ENCODE measurements at regions of chr3 and their contacts with region 1.

Region 1: DNA sequence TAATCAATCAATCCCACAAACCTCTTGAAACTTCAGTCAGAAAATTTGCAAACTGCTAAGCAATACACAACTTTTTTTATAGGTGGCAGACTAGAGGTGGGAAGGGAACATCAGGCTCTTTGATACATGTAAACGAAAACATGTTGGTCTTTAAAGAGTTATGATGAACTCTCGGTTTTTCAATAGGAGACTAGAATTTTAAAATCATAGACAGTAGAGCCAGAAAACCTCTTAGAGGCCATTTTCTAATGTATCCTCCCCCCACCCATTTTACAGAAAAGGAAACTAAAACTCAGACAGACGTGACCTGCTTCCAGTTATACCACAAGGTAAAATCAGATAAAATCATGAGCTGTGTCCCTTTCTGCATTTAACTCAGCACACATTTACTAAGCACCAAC is 179.1 kb upstream of the LPP start:
- DNase-seq: peak; percentile 55 to 70 (median 57)
- H3K4me3 ChIP-seq: peak overlapping the region; percentile 2 to 16
- H3K4me3 Mint-ChIP-seq: peak overlapping the region; percentile 57 to 90 (median 74)
- H3K27ac ChIP-seq: peak overlapping the region; percentile 46
- H3K27ac Mint-ChIP-seq: peak overlapping the region; percentile 85 to 98 (median 91)
- H3K4me1 ChIP-seq: peaks cover 55% of the 10 kb centered on the region
- H3K4me1 Mint-ChIP-seq: peaks cover 56 to 67% (median 62%) of the 10 kb centered on the region in 4 donors
- H3K27me3 ChIP-seq: no peaks in the 10 kb centered on the region
- H3K27me3 Mint-ChIP-seq: no peaks in the 10 kb centered on the region

Region 2: DNA sequence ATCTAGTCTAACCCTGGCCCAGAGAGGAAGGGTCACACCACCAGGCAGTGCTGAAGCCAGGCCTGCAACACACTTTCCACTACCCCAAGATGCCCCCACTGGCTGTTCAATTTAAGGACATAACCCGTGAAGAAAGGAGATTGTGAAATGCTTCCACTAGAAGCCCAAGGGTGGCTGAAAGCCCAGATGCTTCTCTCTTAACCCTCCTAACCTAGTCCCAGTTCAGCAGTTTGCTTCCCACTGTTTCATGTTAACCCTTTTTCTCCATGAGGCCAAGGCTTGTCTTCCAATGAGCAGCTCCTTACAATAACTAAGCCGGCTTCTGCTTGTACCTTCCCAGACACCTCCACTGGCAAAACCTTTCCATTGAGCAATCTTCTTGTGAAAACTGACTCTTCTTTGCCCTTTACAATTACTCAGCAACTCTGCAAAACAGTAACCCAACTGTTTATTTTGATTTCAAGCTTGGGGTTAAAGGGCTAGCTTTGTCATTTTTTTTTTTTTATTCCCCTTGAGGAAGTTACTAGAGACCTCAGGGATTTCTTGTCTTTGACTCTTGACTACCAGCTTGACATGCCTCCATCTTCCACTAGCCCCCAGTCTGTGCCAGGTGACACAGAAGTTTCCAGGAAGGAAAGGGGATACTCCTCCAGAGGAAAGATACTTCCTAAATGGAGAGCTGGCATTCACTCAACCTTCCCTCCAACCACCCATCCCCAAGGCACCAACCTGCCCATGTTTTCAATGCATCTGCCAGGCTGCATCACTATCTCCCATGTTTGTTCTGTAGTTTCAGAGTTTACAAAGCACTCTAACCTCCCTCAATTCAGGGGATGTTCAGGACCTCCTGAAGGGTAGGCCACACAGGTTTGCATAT is 19.6 kb before region 1 on chr3:
- CTCF ChIA-PET with region 1: interaction called, 33 read pairs
- POLR2A ChIA-PET with region 1: interaction called, 6 read pairs
- intact Hi-C with region 1: no loop called
- DNase-seq: no peak
- H3K4me3 ChIP-seq: no peak overlapping the region
- H3K4me3 Mint-ChIP-seq: no peak overlapping the region
- H3K27ac ChIP-seq: no peak overlapping the region
- H3K27ac Mint-ChIP-seq: peak overlapping the region in 2 of 7 donors; percentile 6 to 21
- H3K4me1 ChIP-seq: peaks cover 35% of the 10 kb centered on the region
- H3K4me1 Mint-ChIP-seq: peaks cover 23 to 59% (median 33%) of the 10 kb centered on the region in 4 donors
- H3K27me3 ChIP-seq: no peaks in the 10 kb centered on the region
- H3K27me3 Mint-ChIP-seq: no peaks in the 10 kb centered on the region

Region 3: GRCh38 chr3:188000361-188000861 is 25.5 kb after region 1 on chr3:
- CTCF ChIA-PET with region 1: interaction called, 26 read pairs
- POLR2A ChIA-PET with region 1: interaction called, 15 read pairs
- intact Hi-C with region 1: no loop called
- DNase-seq: peak in 2 of 5 donors; percentile 13 to 41
- H3K4me3 ChIP-seq: no peak overlapping the region
- H3K4me3 Mint-ChIP-seq: peak overlapping the region; percentile 67 to 86 (median 81)
- H3K27ac ChIP-seq: peak overlapping the region; percentile 41
- H3K27ac Mint-ChIP-seq: peak overlapping the region; percentile 89 to 97 (median 94)
- H3K4me1 ChIP-seq: peaks cover 68% of the 10 kb centered on the region
- H3K4me1 Mint-ChIP-seq: peaks cover 59 to 83% (median 68%) of the 10 kb centered on the region in 4 donors
- H3K27me3 ChIP-seq: no peaks in the 10 kb centered on the region
- H3K27me3 Mint-ChIP-seq: no peaks in the 10 kb centered on the region

Region 4: DNA sequence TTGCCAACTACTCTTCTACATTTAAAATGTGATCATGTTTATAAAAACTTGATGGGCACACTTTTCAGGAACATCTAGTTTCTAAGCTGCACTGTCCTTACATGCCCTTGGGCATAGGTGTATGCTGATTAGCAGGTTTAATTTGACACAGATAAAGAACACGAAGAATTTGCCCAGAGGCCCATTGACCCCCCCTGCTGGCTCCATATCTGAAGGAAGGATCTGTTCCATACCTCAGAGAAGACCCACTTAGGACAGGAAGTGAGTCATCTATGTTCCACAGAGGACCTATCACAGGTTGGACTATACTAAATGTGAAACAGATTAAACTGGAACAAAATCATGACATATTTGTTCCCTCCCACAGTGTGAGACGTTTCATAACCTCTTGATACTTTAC is 86.3 kb after region 1 on chr3:
- CTCF ChIA-PET with region 1: interaction called, 5 read pairs
- POLR2A ChIA-PET with region 1: no interaction called
- intact Hi-C with region 1: loop called (anchors 2 kb)
- DNase-seq: peak; percentile 50 to 78 (median 63)
- H3K4me3 ChIP-seq: no peak overlapping the region
- H3K4me3 Mint-ChIP-seq: peak overlapping the region in 2 of 8 donors; percentile 17 to 43
- H3K27ac ChIP-seq: no peak overlapping the region
- H3K27ac Mint-ChIP-seq: peak overlapping the region in 6 of 7 donors; percentile 71 to 95 (median 84)
- H3K4me1 ChIP-seq: peaks cover 12% of the 10 kb centered on the region
- H3K4me1 Mint-ChIP-seq: peaks cover 12 to 19% (median 14%) of the 10 kb centered on the region in 4 donors
- H3K27me3 ChIP-seq: no peaks in the 10 kb centered on the region
- H3K27me3 Mint-ChIP-seq: no peaks in the 10 kb centered on the region

Region 5: GRCh38 chr3:188257384-188258026 is 282.6 kb after region 1 on chr3:
- CTCF ChIA-PET with region 1: no interaction called
- POLR2A ChIA-PET with region 1: no interaction called
- intact Hi-C with region 1: loop called (anchors 10 kb)
- DNase-seq: no peak
- H3K4me3 ChIP-seq: no peak overlapping the region
- H3K4me3 Mint-ChIP-seq: no peak overlapping the region
- H3K27ac ChIP-seq: no peak overlapping the region
- H3K27ac Mint-ChIP-seq: peak overlapping the region in 1 of 7 donors; percentile 32
- H3K4me1 ChIP-seq: no peaks in the 10 kb centered on the region
- H3K4me1 Mint-ChIP-seq: peaks cover 9 to 27% (median 14%) of the 10 kb centered on the region in 4 donors
- H3K27me3 ChIP-seq: no peaks in the 10 kb centered on the region
- H3K27me3 Mint-ChIP-seq: no peaks in the 10 kb centered on the region

Region 6: DNA sequence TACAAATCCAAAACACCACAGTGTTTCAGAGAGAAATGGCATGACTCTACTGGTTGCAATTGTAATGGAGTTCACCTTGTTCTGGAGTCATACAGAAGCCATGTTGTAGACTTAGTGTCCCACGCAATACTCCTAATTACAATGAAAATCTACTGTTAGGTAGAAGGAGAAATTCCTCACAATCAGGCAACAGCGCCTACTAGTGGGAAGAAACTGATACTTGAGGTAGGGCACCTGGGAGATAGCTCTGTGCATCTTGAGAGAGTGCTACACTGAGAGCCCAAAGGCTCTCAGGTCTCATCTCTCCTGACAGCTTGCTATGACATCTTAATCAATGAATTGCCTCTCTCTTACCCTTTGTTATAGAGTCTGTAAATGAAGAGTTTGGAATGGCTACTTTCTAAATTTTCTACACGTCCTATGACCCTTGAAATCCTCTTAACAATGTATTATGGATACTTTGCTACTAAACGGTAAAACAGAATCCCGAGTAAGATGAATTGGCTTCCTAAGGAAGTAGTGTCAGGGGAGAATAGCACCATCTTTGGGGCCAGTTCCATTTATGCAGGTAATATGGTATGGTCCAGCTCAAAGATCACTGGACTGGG is 774.2 kb after region 1 on chr3:
- CTCF ChIA-PET with region 1: no interaction called
- POLR2A ChIA-PET with region 1: no interaction called
- intact Hi-C with region 1: loop called (anchors 2 kb)
- DNase-seq: peak; percentile 55 to 63 (median 59)
- H3K4me3 ChIP-seq: no peak overlapping the region
- H3K4me3 Mint-ChIP-seq: no peak overlapping the region
- H3K27ac ChIP-seq: no peak overlapping the region
- H3K27ac Mint-ChIP-seq: no peak overlapping the region
- H3K4me1 ChIP-seq: no peaks in the 10 kb centered on the region
- H3K4me1 Mint-ChIP-seq: peaks cover 0 to 5% (median 0%) of the 10 kb centered on the region in 4 donors
- H3K27me3 ChIP-seq: no peaks in the 10 kb centered on the region
- H3K27me3 Mint-ChIP-seq: no peaks in the 10 kb centered on the region